Naive thymus-derived CD4-positive, alpha-beta T cell (primary cell): ENCODE measurements at regions of chr17 and their contacts with region 1.

Region 1: DNA sequence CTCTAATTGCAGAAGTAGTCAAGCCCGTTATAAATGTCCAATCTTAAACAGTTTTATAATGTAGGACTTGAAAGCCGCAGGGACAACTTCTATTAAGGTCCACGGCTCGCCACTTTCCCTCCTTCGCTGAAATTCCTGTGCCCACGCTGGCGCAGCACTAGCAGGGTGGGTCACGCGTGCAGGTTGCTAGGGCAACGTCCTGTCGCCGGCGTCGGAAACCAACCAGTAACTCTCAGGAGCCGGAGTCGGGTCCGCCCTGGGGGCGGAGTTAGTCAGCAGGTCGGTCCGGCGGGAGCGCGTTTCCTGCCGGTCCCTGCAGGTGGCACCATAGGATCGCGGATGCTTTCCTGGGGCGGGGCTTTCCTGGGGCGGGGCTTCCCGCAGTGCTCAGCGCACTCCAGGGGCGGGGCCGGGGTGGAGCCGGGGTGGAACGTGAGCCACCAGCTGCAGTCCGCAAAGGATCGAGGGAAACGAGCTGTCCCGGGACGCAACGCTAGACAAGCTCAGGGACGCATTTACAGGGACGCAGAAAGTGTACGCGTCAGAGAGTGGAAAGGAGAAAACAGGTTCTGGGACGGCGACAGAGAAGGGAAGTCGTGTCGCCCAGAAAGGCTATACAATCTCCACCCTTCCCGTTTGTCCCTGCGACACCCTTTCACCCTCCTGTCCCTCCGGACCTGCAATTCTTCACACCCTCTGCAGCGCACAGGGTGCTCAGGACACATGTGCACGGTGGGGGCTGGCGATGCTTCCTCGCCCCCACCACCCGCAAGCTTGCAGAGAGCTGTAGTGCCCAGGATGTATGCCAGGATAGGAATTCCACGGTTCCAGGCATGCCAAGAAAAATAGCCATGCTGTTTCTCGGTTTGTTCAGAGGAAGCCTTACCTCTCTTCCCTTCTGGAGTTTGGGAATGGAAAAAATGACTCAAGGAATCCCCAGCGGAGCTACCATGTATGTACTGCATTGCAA is 12.4 kb downstream of the COPZ2 start:
- DNase-seq: peak; percentile 91 to 97 (median 95)
- ATAC-seq: peak; percentile 98
- H3K4me3 ChIP-seq: peak overlapping the region; percentile 43
- H3K4me3 Mint-ChIP-seq: peak overlapping the region; percentile 83 to 92 (median 88)
- H3K27ac ChIP-seq: no peak overlapping the region
- H3K27ac Mint-ChIP-seq: peak overlapping the region in 8 of 9 donors; percentile 13 to 91 (median 73)
- H3K4me1 ChIP-seq: peaks cover 9 to 26% of the 10 kb centered on the region in 2 donors
- H3K4me1 Mint-ChIP-seq: peaks cover 23 to 46% (median 34%) of the 10 kb centered on the region in 7 donors
- H3K27me3 ChIP-seq: peaks cover 0 to 11% of the 10 kb centered on the region in 2 donors
- H3K27me3 Mint-ChIP-seq: peaks cover 28 to 50% (median 40%) of the 10 kb centered on the region in 5 donors

Region 2: DNA sequence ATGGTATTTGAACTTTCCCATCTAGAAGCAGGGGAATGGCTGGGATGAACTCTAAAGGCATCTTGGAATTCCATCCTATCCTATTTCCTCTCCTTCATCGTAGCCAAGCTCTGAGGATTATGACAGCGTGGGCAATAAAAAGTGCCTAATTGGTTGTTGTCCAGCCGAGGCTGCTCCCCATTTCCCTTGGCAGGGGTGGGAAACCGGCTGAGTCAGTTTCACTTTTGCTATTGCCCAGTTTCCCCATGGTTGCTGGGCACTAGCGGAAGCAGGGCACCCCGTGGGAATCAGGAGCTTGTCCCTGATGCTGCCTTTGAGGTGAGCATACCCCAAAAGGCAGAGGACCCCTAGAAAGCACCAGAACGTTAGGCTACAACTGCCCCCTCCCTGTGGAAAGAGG is 143.0 kb before region 1 on chr17:
- CTCF ChIA-PET with region 1: no interaction called
- POLR2A ChIA-PET with region 1: no interaction called
- intact Hi-C with region 1: no loop called
- DNase-seq: no peak
- ATAC-seq: no peak
- H3K4me3 ChIP-seq: no peak overlapping the region
- H3K4me3 Mint-ChIP-seq: no peak overlapping the region
- H3K27ac ChIP-seq: no peak overlapping the region
- H3K27ac Mint-ChIP-seq: no peak overlapping the region
- H3K4me1 ChIP-seq: peaks cover 0 to 31% of the 10 kb centered on the region in 2 donors
- H3K4me1 Mint-ChIP-seq: peaks cover 21 to 42% (median 33%) of the 10 kb centered on the region in 7 donors
- H3K27me3 ChIP-seq: no peaks in the 10 kb centered on the region
- H3K27me3 Mint-ChIP-seq: peaks cover 0 to 19% (median 5%) of the 10 kb centered on the region in 5 donors

Region 3: DNA sequence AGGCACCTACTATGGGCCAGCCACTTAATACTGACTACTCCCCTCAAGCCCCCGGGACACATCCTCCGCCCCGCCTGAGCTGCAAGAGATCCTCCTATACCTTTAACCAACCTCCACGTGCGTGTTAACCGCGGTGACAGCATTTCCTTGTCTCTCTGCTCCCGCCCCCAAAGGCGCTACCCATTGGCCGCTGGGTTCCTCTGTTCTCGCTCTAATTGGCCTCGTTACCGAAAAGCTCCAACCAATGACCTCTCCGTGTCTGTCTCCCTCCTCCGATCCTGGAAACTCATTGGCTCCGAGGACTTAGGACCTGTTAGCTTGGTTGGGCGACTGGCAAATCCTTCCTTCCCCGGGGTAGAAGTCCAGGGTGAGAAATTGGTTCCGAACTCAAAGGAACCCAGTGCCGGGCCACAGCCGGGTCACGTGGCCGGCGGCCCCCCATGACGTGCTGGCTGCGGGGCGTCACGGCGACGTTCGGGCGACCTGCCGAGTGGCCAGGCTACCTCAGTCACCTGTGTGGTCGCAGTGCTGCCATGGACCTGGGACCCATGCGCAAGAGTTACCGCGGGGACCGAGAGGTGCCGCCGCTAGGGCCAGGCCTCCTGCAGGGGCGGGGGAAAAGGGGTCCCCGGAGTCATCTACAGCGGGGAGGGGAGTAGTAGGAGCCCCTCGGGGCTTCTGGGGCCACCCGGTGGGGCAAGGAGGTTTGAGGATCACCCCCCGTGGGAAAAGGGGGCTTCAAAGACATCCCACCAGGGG is 83.8 kb before region 1 on chr17 and contains the start of gene PNPO:
- CTCF ChIA-PET with region 1: no interaction called
- POLR2A ChIA-PET with region 1: no interaction called
- intact Hi-C with region 1: loop called (anchors 2 kb)
- DNase-seq: peak; percentile 66 to 96 (median 94)
- ATAC-seq: peak; percentile 99
- H3K4me3 ChIP-seq: peak within 1 kb of the TSS; percentile 75
- H3K4me3 Mint-ChIP-seq: peak within 1 kb of the TSS; percentile 75 to 96 (median 88)
- H3K27ac ChIP-seq: peak within 1 kb of the TSS; percentile 90
- H3K27ac Mint-ChIP-seq: peak within 1 kb of the TSS; percentile 34 to 95 (median 86)
- H3K4me1 ChIP-seq: peaks cover 21 to 33% of the 10 kb centered on the region in 2 donors
- H3K4me1 Mint-ChIP-seq: peaks cover 35 to 63% (median 47%) of the 10 kb centered on the region in 7 donors
- H3K27me3 ChIP-seq: no peaks in the 10 kb centered on the region
- H3K27me3 Mint-ChIP-seq: no peaks in the 10 kb centered on the region
- total RNA-seq, gene PNPO: 12.0 to 35.7 (median 14.1) TPM

Region 4: GRCh38 chr17:48011405-48012150 is 13.6 kb before region 1 on chr17:
- CTCF ChIA-PET with region 1: interaction called, 3 read pairs
- POLR2A ChIA-PET with region 1: no interaction called
- intact Hi-C with region 1: loop called (anchors 1 kb)
- DNase-seq: peak in 7 of 9 donors; percentile 20 to 34 (median 32)
- ATAC-seq: peak; percentile 74
- H3K4me3 ChIP-seq: peak overlapping the region; percentile 47
- H3K4me3 Mint-ChIP-seq: peak overlapping the region; percentile 70 to 90 (median 78)
- H3K27ac ChIP-seq: no peak overlapping the region
- H3K27ac Mint-ChIP-seq: peak overlapping the region in 1 of 9 donors; percentile 48
- H3K4me1 ChIP-seq: peaks cover 9% of the 10 kb centered on the region in 2 donors
- H3K4me1 Mint-ChIP-seq: peaks cover 9 to 25% (median 13%) of the 10 kb centered on the region in 7 donors
- H3K27me3 ChIP-seq: peaks cover 7 to 10% of the 10 kb centered on the region in 2 donors
- H3K27me3 Mint-ChIP-seq: peaks cover 44 to 66% (median 55%) of the 10 kb centered on the region in 5 donors

Region 5: GRCh38 chr17:48084932-48085444 is 59.8 kb after region 1 on chr17:
- CTCF ChIA-PET with region 1: interaction called, 25 read pairs
- POLR2A ChIA-PET with region 1: no interaction called
- intact Hi-C with region 1: no loop called
- DNase-seq: no peak
- ATAC-seq: no peak
- H3K4me3 ChIP-seq: no peak overlapping the region
- H3K4me3 Mint-ChIP-seq: no peak overlapping the region
- H3K27ac ChIP-seq: no peak overlapping the region
- H3K27ac Mint-ChIP-seq: no peak overlapping the region
- H3K4me1 ChIP-seq: no peaks in the 10 kb centered on the region
- H3K4me1 Mint-ChIP-seq: peaks cover 0 to 20% (median 10%) of the 10 kb centered on the region in 7 donors
- H3K27me3 ChIP-seq: no peaks in the 10 kb centered on the region
- H3K27me3 Mint-ChIP-seq: no peaks in the 10 kb centered on the region

Region 6: GRCh38 chr17:48335858-48336500 is 310.8 kb after region 1 on chr17:
- CTCF ChIA-PET with region 1: interaction called, 5 read pairs
- POLR2A ChIA-PET with region 1: no interaction called
- intact Hi-C with region 1: loop called (anchors 2 to 10 kb)
- DNase-seq: peak in 7 of 9 donors; percentile 27 to 70 (median 63)
- ATAC-seq: peak; percentile 77
- H3K4me3 ChIP-seq: no peak overlapping the region
- H3K4me3 Mint-ChIP-seq: no peak overlapping the region
- H3K27ac ChIP-seq: no peak overlapping the region
- H3K27ac Mint-ChIP-seq: peak overlapping the region in 1 of 9 donors; percentile 15
- H3K4me1 ChIP-seq: peaks cover 0 to 3% of the 10 kb centered on the region in 2 donors
- H3K4me1 Mint-ChIP-seq: peaks cover 3 to 25% (median 12%) of the 10 kb centered on the region in 7 donors
- H3K27me3 ChIP-seq: no peaks in the 10 kb centered on the region
- H3K27me3 Mint-ChIP-seq: no peaks in the 10 kb centered on the region

Region 7: GRCh38 chr17:48618256-48618897 is 593.2 kb after region 1 on chr17:
- CTCF ChIA-PET with region 1: interaction called, 7 read pairs
- POLR2A ChIA-PET with region 1: no interaction called
- intact Hi-C with region 1: loop called (anchors 1 to 2 kb)
- DNase-seq: peak; percentile 62 to 86 (median 74)
- ATAC-seq: peak; percentile 90
- H3K4me3 ChIP-seq: no peak overlapping the region
- H3K4me3 Mint-ChIP-seq: peak overlapping the region in 9 of 10 donors; percentile 12 to 53 (median 40)
- H3K27ac ChIP-seq: no peak overlapping the region
- H3K27ac Mint-ChIP-seq: peak overlapping the region in 3 of 9 donors; percentile 74 to 83 (median 81)
- H3K4me1 ChIP-seq: peaks cover 19 to 23% of the 10 kb centered on the region in 2 donors
- H3K4me1 Mint-ChIP-seq: peaks cover 26 to 49% (median 36%) of the 10 kb centered on the region in 7 donors
- H3K27me3 ChIP-seq: peaks cover 35 to 59% of the 10 kb centered on the region in 2 donors
- H3K27me3 Mint-ChIP-seq: peaks cover 90 to 97% (median 92%) of the 10 kb centered on the region in 5 donors

Region 8: DNA sequence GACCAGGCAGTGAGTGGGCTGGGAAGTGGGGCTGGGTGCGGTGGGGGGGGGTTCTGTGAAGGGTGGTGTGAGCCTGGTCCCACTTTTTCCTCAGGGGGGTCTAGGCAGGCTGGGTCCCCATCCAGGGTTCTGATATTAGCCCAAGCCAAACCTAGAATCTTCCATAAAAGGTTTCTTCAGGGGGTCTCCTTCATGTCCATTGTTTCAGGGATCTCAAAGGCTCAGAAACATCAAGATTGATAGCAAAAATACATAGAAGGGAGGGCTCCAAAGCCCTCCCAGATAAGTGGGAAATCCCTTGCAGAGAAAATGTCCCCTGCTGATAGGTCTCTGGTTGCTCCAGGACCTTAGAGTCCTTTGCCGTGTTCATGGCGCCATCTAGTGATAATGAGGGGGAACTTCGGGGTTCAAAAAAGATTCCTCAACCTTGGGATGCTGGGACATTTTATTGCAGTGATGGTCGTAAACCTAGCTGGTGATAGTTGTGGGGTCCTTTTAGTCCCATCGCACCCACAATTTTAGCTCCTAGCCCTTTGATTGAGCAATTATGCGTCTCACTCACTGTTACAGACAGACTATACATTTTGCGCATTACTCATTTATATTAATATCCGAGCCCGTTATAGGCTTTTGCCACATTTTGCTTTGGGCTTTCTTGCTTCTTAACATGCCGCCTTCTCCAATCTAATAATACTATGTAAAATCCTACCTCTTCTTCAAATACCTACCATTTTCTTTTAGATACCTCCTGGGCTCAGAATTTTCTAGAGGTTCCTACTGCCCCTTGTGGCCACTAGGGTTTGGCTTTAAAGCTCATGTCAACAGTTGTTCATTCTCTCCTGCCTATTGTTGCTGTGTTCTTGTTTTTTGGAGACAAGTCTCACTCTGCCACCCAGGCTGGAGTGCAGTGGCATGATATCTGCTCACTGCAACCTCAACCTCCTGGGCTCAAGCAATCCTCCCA is 1007.0 kb after region 1 on chr17:
- CTCF ChIA-PET with region 1: no interaction called
- POLR2A ChIA-PET with region 1: no interaction called
- intact Hi-C with region 1: loop called in 1 of 2 experiments (anchors 10 kb)
- DNase-seq: peak in 8 of 9 donors; percentile 7 to 49 (median 41)
- ATAC-seq: peak; percentile 81
- H3K4me3 ChIP-seq: no peak overlapping the region
- H3K4me3 Mint-ChIP-seq: no peak overlapping the region
- H3K27ac ChIP-seq: no peak overlapping the region
- H3K27ac Mint-ChIP-seq: no peak overlapping the region
- H3K4me1 ChIP-seq: no peaks in the 10 kb centered on the region
- H3K4me1 Mint-ChIP-seq: peaks cover 0 to 7% (median 6%) of the 10 kb centered on the region in 7 donors
- H3K27me3 ChIP-seq: no peaks in the 10 kb centered on the region
- H3K27me3 Mint-ChIP-seq: peaks cover 0 to 10% (median 9%) of the 10 kb centered on the region in 5 donors